Natural killer cell (primary cell): ENCODE measurements at regions of chr14 and their contacts with region 1.

Region 1: GRCh38 chr14:22589096-22589839 is at the start of gene DAD1:
- DNase-seq: peak; percentile 100
- ATAC-seq: peak; percentile 86 to 96 (median 90)
- H3K4me3 ChIP-seq: peak within 1 kb of the TSS; percentile 80
- H3K4me3 Mint-ChIP-seq: peak within 1 kb of the TSS; percentile 90
- H3K27ac ChIP-seq: peak within 1 kb of the TSS; percentile 97
- H3K27ac Mint-ChIP-seq: peak within 1 kb of the TSS; percentile 97 to 99
- H3K4me1 ChIP-seq: peaks cover 19% of the 10 kb centered on the region
- H3K4me1 Mint-ChIP-seq: peaks cover 45 to 47% of the 10 kb centered on the region in 2 donors
- H3K27me3 ChIP-seq: no peaks in the 10 kb centered on the region
- H3K27me3 Mint-ChIP-seq: peaks cover 13 to 17% of the 10 kb centered on the region in 2 donors
- CTCF ChIP-seq: no peak
- total RNA-seq, gene DAD1: 79.5 to 97.9 (median 92.8) TPM

Region 2: GRCh38 chr14:22466491-22466890 is 122.8 kb before region 1 on chr14:
- intact Hi-C with region 1: no loop called
- DNase-seq: no peak
- ATAC-seq: peak in 2 of 3 donors; percentile 41 to 56
- H3K4me3 ChIP-seq: no peak overlapping the region
- H3K4me3 Mint-ChIP-seq: peak overlapping the region; percentile 36
- H3K27ac ChIP-seq: peak overlapping the region; percentile 74
- H3K27ac Mint-ChIP-seq: peak overlapping the region; percentile 80 to 89
- H3K4me1 ChIP-seq: peaks cover 89% of the 10 kb centered on the region
- H3K4me1 Mint-ChIP-seq: peaks cover 91 to 95% of the 10 kb centered on the region in 2 donors
- H3K27me3 ChIP-seq: no peaks in the 10 kb centered on the region
- H3K27me3 Mint-ChIP-seq: no peaks in the 10 kb centered on the region
- CTCF ChIP-seq: no peak

Region 3: DNA sequence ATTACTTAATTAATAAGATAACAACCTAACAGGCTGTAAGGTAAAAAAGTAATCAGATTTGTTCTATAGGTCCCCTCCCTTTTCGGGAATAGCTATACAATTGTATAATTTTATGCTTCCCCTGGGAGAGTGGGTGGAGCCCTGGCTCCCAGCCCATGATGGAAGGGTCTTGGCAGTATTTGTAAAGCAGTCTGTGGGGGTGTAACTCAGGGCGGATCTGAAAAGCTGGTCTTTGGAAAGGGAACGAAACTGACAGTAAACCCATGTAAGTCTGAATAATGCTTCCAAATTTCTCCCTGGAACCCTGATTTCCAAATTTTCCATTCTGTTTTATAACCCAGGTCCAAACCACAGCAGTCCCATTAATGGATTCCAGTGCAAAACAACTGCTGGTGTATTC is 110.6 kb before region 1 on chr14:
- intact Hi-C with region 1: no loop called
- DNase-seq: no peak
- ATAC-seq: no peak
- H3K4me3 ChIP-seq: no peak overlapping the region
- H3K4me3 Mint-ChIP-seq: peak overlapping the region; percentile 87
- H3K27ac ChIP-seq: peak overlapping the region; percentile 74
- H3K27ac Mint-ChIP-seq: peak overlapping the region; percentile 80 to 89
- H3K4me1 ChIP-seq: peaks cover 72% of the 10 kb centered on the region
- H3K4me1 Mint-ChIP-seq: peaks cover 97 to 98% of the 10 kb centered on the region in 2 donors
- H3K27me3 ChIP-seq: no peaks in the 10 kb centered on the region
- H3K27me3 Mint-ChIP-seq: no peaks in the 10 kb centered on the region
- CTCF ChIP-seq: no peak

Region 4: GRCh38 chr14:22766456-22767322 is 177.4 kb after region 1 on chr14 and contains the start of gene OXA1L:
- intact Hi-C with region 1: loop called (anchors 2 kb)
- DNase-seq: peak; percentile 90 to 99
- ATAC-seq: peak; percentile 92 to 95 (median 95)
- H3K4me3 ChIP-seq: peak within 1 kb of the TSS; percentile 86
- H3K4me3 Mint-ChIP-seq: peak within 1 kb of the TSS; percentile 92
- H3K27ac ChIP-seq: peak within 1 kb of the TSS; percentile 79
- H3K27ac Mint-ChIP-seq: peak within 1 kb of the TSS; percentile 93 to 94
- H3K4me1 ChIP-seq: peaks cover 14% of the 10 kb centered on the region
- H3K4me1 Mint-ChIP-seq: peaks cover 35 to 36% of the 10 kb centered on the region in 2 donors
- H3K27me3 ChIP-seq: no peaks in the 10 kb centered on the region
- H3K27me3 Mint-ChIP-seq: no peaks in the 10 kb centered on the region
- CTCF ChIP-seq: no peak
- total RNA-seq, gene OXA1L: 121 to 143 (median 125) TPM

Region 5: DNA sequence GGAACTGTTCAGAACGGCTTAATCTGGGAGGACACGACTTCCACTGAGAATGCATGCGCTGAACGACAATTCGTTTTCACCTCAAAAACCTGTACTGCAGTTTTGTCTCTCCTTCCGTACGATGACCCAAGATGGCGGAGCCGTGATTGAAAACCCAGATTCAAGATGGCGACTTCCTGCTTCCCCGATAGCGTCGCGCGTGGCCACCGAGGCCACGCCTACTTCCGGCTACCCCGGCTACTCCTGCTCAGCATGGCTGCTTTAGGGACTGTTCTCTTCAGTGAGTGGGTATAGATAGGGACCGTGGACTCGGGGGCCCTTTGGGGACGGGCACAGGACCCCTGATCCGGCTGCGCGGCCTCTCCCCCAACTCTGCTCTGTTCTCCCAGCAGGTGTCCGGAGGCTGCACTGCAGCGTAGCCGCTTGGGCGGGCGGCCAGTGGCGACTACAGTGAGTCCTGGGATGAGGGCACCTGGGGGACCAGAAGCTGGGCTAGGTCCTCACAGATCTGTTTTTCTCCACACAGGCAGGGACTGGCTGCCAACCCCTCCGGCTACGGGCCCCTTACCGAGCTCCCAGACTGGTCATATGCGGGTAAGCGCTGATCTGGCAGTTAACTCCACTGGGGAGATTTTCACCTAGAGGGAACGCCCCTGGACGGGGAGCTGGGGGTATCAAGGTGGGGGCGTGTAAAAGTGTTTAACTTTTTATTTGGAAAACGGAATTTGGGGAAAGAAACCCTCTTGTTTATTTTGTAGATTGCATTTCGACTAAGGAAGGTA is 240.6 kb after region 1 on chr14 and contains the start of gene MRPL52:
- intact Hi-C with region 1: loop called (anchors 5 kb)
- DNase-seq: peak; percentile 77 to 97
- ATAC-seq: peak; percentile 96 to 97 (median 96)
- H3K4me3 ChIP-seq: peak within 1 kb of the TSS; percentile 61
- H3K4me3 Mint-ChIP-seq: peak within 1 kb of the TSS; percentile 94
- H3K27ac ChIP-seq: peak within 1 kb of the TSS; percentile 84
- H3K27ac Mint-ChIP-seq: peak within 1 kb of the TSS; percentile 93 to 94
- H3K4me1 ChIP-seq: peaks cover 13% of the 10 kb centered on the region
- H3K4me1 Mint-ChIP-seq: peaks cover 16% of the 10 kb centered on the region in 2 donors
- H3K27me3 ChIP-seq: no peaks in the 10 kb centered on the region
- H3K27me3 Mint-ChIP-seq: peaks cover 8% of the 10 kb centered on the region in 2 donors
- CTCF ChIP-seq: no peak
- total RNA-seq, gene MRPL52: 40.5 to 42.0 (median 41.6) TPM